ENCODE measurements at regions of chr4 and their contacts with region 1.

Region 1: DNA sequence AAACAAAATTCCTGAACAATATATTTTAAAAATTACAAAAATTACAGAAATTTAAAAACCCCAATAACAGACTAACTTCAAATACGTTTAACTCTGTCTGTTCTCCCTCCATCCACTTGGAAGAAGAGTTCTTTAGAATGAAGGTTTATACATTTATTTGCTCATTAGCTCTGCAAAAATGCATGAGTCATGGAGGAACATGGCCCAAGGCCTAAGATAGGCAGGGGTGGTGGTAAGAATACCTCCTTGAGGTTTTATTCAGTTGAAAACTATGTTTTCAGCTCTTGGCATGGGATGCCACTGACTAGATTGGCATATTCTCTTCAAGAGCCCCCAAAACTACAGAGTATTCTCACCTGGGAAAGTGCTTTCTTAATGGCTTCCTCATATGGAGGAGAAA is 8.8 kb upstream of the LRRC66 start:
- DNase-seq: peak; percentile 74
- H3K4me3 Mint-ChIP-seq: no peak overlapping the region
- H3K27ac Mint-ChIP-seq: peak overlapping the region; percentile 22
- H3K4me1 Mint-ChIP-seq: peaks cover 14% of the 10 kb centered on the region
- H3K27me3 Mint-ChIP-seq: no peaks in the 10 kb centered on the region
- CTCF ChIP-seq: no peak

Region 2: GRCh38 chr4:51831133-51831532 is 197.8 kb before region 1 on chr4:
- CTCF ChIA-PET with region 1: interaction called, 3 read pairs
- POLR2A ChIA-PET with region 1: no interaction called
- intact Hi-C with region 1: loop called (anchors 1 kb)
- DNase-seq: peak; percentile 69
- H3K4me3 Mint-ChIP-seq: no peak overlapping the region
- H3K27ac Mint-ChIP-seq: no peak overlapping the region
- H3K4me1 Mint-ChIP-seq: no peaks in the 10 kb centered on the region
- H3K27me3 Mint-ChIP-seq: no peaks in the 10 kb centered on the region
- CTCF ChIP-seq: peak; percentile 53

Region 3: DNA sequence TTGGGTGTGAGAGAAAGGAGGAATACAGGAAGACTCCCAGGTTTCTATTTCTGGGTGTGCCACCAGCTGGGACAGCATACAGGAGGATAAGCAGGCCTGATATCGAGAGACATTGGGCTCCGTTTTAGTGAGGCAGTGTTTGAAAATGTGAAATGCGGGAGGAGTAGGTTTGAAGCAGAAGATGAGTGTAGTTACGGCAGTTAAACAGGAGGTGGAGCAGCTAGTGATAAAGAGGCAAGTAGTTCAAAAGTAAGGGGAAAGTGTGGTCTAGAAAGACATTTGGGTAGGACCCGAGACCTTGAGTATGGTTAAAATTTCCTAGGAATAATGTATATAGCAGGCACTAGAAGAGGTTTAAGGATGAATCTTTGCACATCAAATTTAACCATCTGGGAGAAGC is 143.6 kb before region 1 on chr4:
- CTCF ChIA-PET with region 1: interaction called, 18 read pairs
- POLR2A ChIA-PET with region 1: no interaction called
- intact Hi-C with region 1: no loop called
- DNase-seq: peak; percentile 40
- H3K4me3 Mint-ChIP-seq: no peak overlapping the region
- H3K27ac Mint-ChIP-seq: no peak overlapping the region
- H3K4me1 Mint-ChIP-seq: no peaks in the 10 kb centered on the region
- H3K27me3 Mint-ChIP-seq: no peaks in the 10 kb centered on the region
- CTCF ChIP-seq: peak; percentile 22

Region 4: GRCh38 chr4:51890760-51891159 is 138.2 kb before region 1 on chr4:
- CTCF ChIA-PET with region 1: interaction called, 25 read pairs
- POLR2A ChIA-PET with region 1: no interaction called
- intact Hi-C with region 1: loop called (anchors 1 kb)
- DNase-seq: no peak
- H3K4me3 Mint-ChIP-seq: no peak overlapping the region
- H3K27ac Mint-ChIP-seq: peak overlapping the region; percentile 37
- H3K4me1 Mint-ChIP-seq: peaks cover 6% of the 10 kb centered on the region
- H3K27me3 Mint-ChIP-seq: no peaks in the 10 kb centered on the region
- CTCF ChIP-seq: no peak

Region 5: DNA sequence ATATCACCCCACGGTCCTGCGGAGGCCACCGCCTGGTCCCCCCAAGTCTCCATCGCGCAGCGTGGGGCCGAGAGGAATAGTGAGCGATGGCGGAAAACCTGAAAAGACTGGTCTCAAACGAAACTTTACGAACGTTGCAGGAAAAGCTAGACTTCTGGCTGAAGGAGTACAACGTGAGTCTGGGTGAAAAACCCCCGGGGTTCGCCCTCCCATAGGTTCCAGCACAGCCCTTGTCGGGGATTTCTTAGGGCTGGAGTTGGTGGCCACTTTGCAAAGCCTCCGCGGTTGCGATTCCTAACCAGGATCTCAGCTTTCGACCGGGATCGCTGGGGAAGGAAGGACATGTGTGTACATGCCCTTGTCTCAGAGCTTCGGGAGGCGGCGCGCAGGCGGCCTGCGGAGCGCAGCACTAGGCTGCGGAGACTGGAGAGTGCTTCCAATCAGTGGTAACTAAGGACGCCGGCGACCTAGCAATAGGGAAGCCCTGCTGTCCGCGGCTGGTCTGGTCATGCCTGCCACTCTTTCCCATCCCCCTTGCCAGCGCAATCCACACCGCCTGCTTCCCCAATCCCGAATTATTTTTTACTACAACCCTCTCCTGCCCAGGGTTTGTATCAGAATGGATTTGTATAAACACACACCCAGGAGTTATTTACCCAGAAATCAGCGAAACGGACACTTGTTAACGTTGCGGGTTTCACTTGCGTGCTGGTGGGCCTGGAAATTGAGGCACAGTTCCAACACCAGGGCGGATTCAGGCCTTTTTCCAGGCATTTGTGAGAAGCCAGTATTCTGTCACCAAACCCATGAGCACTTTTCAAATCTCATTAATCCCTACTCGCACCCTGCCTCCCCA is 22.9 kb after region 1 on chr4:
- CTCF ChIA-PET with region 1: no interaction called
- POLR2A ChIA-PET with region 1: interaction called, 10 read pairs
- intact Hi-C with region 1: no loop called
- DNase-seq: peak; percentile 95
- H3K4me3 Mint-ChIP-seq: peak overlapping the region; percentile 88
- H3K27ac Mint-ChIP-seq: peak overlapping the region; percentile 95
- H3K4me1 Mint-ChIP-seq: peaks cover 27% of the 10 kb centered on the region
- H3K27me3 Mint-ChIP-seq: no peaks in the 10 kb centered on the region
- CTCF ChIP-seq: no peak

Region 6: GRCh38 chr4:52091535-52092200 is 62.7 kb after region 1 on chr4:
- CTCF ChIA-PET with region 1: no interaction called
- POLR2A ChIA-PET with region 1: no interaction called
- intact Hi-C with region 1: no loop called
- DNase-seq: no peak
- H3K4me3 Mint-ChIP-seq: no peak overlapping the region
- H3K27ac Mint-ChIP-seq: no peak overlapping the region
- H3K4me1 Mint-ChIP-seq: no peaks in the 10 kb centered on the region
- H3K27me3 Mint-ChIP-seq: no peaks in the 10 kb centered on the region
- CTCF ChIP-seq: no peak

Region 7: DNA sequence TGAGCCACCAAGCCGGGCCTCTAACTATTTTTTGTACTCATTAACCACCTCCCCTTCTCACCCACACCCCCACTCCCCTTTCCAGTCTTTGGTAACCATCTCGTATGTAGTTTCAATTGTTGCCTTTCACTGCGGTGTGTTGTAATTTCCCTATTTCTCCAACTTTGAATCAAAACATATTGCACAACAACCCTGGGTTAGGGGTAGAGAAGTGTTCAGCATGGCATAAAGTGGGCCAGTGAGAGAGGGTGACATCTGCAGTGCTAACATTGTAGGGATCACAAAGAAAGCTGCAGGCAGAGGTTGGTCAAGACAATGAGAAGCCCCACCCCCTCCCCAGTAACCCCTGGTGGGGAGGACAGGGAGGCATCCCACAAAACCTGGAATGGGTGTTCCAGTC is 114.8 kb after region 1 on chr4:
- CTCF ChIA-PET with region 1: no interaction called
- POLR2A ChIA-PET with region 1: no interaction called
- intact Hi-C with region 1: no loop called
- DNase-seq: peak; percentile 23
- H3K4me3 Mint-ChIP-seq: no peak overlapping the region
- H3K27ac Mint-ChIP-seq: no peak overlapping the region
- H3K4me1 Mint-ChIP-seq: no peaks in the 10 kb centered on the region
- H3K27me3 Mint-ChIP-seq: no peaks in the 10 kb centered on the region
- CTCF ChIP-seq: no peak

Measured in MCF 10A (cell line).